Naive thymus-derived CD8-positive, alpha-beta T cell (primary cell): ENCODE measurements at regions of chr17 and their contacts with region 1.

Region 1: DNA sequence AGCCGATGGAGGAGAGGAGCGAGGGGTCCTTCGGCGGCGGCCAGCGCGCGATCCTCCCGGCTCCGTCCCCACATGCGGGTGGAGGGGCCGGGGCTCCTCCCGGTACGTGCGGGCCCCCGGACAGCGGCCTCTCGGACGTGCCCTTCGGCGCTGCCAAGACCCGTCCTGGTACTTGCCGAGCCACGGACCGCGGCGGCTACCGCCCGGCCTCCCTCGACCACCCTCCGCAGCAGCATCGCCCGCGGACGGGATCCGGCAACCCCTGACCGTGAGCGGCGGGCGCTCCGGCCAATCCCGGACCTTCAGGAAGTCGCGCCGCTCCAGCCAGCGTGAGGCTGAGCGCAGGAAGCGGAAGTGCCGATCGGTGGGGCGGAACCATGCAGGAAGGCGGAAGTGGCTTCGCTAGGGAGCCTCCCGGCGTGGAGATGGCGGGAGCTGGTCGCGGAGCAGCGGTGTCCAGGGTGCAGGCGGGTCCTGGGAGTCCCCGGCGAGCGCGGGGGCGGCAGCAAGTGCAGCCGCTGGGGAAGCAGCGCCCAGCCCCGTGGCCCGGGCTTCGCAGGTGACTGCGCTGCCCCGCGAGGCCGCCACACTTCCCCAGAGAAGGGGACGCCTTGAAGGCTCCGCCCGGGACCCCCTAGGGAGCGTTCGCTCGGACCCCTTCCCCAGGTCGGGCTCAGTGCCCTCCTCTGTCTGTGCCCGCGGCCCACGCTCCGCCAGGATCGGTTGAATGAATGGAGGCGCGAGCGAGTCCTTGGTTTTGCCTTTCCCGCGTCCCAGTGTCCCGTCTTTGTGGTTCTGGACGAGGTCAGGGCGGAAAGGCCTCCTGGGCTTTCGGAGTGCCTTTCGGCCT is at the starts of genes CCDC137 and OXLD1:
- DNase-seq: peak; percentile 86 to 95 (median 90)
- ATAC-seq: peak; percentile 84 to 92
- H3K4me3 Mint-ChIP-seq: peak within 1 kb of the TSS; percentile 82 to 98 (median 94)
- H3K27ac Mint-ChIP-seq: peak within 1 kb of the TSS; percentile 89 to 98 (median 96)
- H3K4me1 Mint-ChIP-seq: peaks cover 16 to 55% (median 39%) of the 10 kb centered on the region in 4 donors
- H3K27me3 Mint-ChIP-seq: peaks cover 0 to 1% (median 0%) of the 10 kb centered on the region in 5 donors
- polyA plus RNA-seq, gene CCDC137: 11.0 to 23.9 (median 11.1) TPM
- polyA plus RNA-seq, gene OXLD1: 67.6 to 110 (median 98.3) TPM

Region 2: GRCh38 chr17:81636505-81637288 is 29.9 kb before region 1 on chr17 and contains the starts of genes NPLOC4 and TSPAN10:
- POLR2A ChIA-PET with region 1: interaction called, 11 read pairs
- DNase-seq: peak; percentile 71 to 86 (median 82)
- ATAC-seq: peak; percentile 96
- H3K4me3 Mint-ChIP-seq: peak within 1 kb of the TSS; percentile 87 to 96 (median 94)
- H3K27ac Mint-ChIP-seq: peak within 1 kb of the TSS; percentile 89 to 96 (median 92)
- H3K4me1 Mint-ChIP-seq: peaks cover 11 to 31% (median 19%) of the 10 kb centered on the region in 4 donors
- H3K27me3 Mint-ChIP-seq: no peaks in the 10 kb centered on the region
- polyA plus RNA-seq, gene NPLOC4: 46.3 to 57.8 (median 51.2) TPM
- polyA plus RNA-seq, gene TSPAN10: 0.83 to 4.0 (median 1.6) TPM

Region 3: GRCh38 chr17:81652906-81653771 is 13.4 kb before region 1 on chr17:
- POLR2A ChIA-PET with region 1: interaction called, 19 read pairs
- DNase-seq: peak in 4 of 10 donors; percentile 16 to 35 (median 32)
- ATAC-seq: peak; percentile 85 to 89
- H3K4me3 Mint-ChIP-seq: peak overlapping the region; percentile 76 to 91 (median 85)
- H3K27ac Mint-ChIP-seq: peak overlapping the region in 9 of 10 donors; percentile 11 to 92 (median 79)
- H3K4me1 Mint-ChIP-seq: peaks cover 7 to 29% (median 20%) of the 10 kb centered on the region in 4 donors
- H3K27me3 Mint-ChIP-seq: peaks cover 2 to 33% (median 9%) of the 10 kb centered on the region in 5 donors

Region 4: GRCh38 chr17:81833160-81833920 is 166.8 kb after region 1 on chr17 and contains the start of gene MCRIP1:
- POLR2A ChIA-PET with region 1: no interaction called
- DNase-seq: peak; percentile 86 to 95 (median 92)
- ATAC-seq: peak; percentile 83 to 84
- H3K4me3 Mint-ChIP-seq: peak within 1 kb of the TSS; percentile 81 to 96 (median 91)
- H3K27ac Mint-ChIP-seq: peak within 1 kb of the TSS; percentile 86 to 99 (median 95)
- H3K4me1 Mint-ChIP-seq: peaks cover 12 to 31% (median 30%) of the 10 kb centered on the region in 4 donors
- H3K27me3 Mint-ChIP-seq: peaks cover 0 to 2% (median 0%) of the 10 kb centered on the region in 5 donors
- polyA plus RNA-seq, gene MCRIP1: 49.5 to 61.8 (median 55.0) TPM